Activated CD4-positive, alpha-beta T cell treated with anti-CD3 and anti-CD28 coated beads for 36 hours (primary cell): ENCODE measurements at regions of chr1 and their contacts with region 1.

Region 1: GRCh38 chr1:26378088-26378878 is 5.7 kb upstream of the ZNF683 start:
- DNase-seq: peak; percentile 80
- ATAC-seq: peak; percentile 95
- H3K4me3 Mint-ChIP-seq: peak overlapping the region; percentile 36
- H3K27ac Mint-ChIP-seq: peak overlapping the region; percentile 47
- H3K4me1 Mint-ChIP-seq: peaks cover 61% of the 10 kb centered on the region
- H3K27me3 Mint-ChIP-seq: no peaks in the 10 kb centered on the region

Region 2: GRCh38 chr1:26352338-26352679 is 26.0 kb before region 1 on chr1:
- CTCF ChIA-PET with region 1: no interaction called
- POLR2A ChIA-PET with region 1: no interaction called
- intact Hi-C with region 1: no loop called
- DNase-seq: no peak
- ATAC-seq: no peak
- H3K4me3 Mint-ChIP-seq: no peak overlapping the region
- H3K27ac Mint-ChIP-seq: no peak overlapping the region
- H3K4me1 Mint-ChIP-seq: no peaks in the 10 kb centered on the region
- H3K27me3 Mint-ChIP-seq: no peaks in the 10 kb centered on the region

Region 3: GRCh38 chr1:26410706-26411623 is 32.7 kb after region 1 on chr1 and contains the start of gene LIN28A:
- CTCF ChIA-PET with region 1: interaction called, 6 read pairs
- POLR2A ChIA-PET with region 1: no interaction called
- intact Hi-C with region 1: loop called in 1 of 2 experiments (anchors 5 kb)
- DNase-seq: no peak
- ATAC-seq: no peak
- H3K4me3 Mint-ChIP-seq: no peak within 1 kb of the TSS
- H3K27ac Mint-ChIP-seq: no peak within 1 kb of the TSS
- H3K4me1 Mint-ChIP-seq: peaks cover 20% of the 10 kb centered on the region
- H3K27me3 Mint-ChIP-seq: peaks cover 43% of the 10 kb centered on the region
- total RNA-seq, gene LIN28A: not detected

Region 4: GRCh38 chr1:26472901-26473845 is 94.9 kb after region 1 on chr1:
- CTCF ChIA-PET with region 1: no interaction called
- POLR2A ChIA-PET with region 1: no interaction called
- intact Hi-C with region 1: no loop called
- DNase-seq: peak; percentile 97
- ATAC-seq: peak; percentile 62
- H3K4me3 Mint-ChIP-seq: peak overlapping the region; percentile 91
- H3K27ac Mint-ChIP-seq: peak overlapping the region; percentile 43
- H3K4me1 Mint-ChIP-seq: peaks cover 50% of the 10 kb centered on the region
- H3K27me3 Mint-ChIP-seq: no peaks in the 10 kb centered on the region

Region 5: GRCh38 chr1:26723013-26723991 is 345.0 kb after region 1 on chr1:
- CTCF ChIA-PET with region 1: no interaction called
- POLR2A ChIA-PET with region 1: no interaction called
- intact Hi-C with region 1: no loop called
- DNase-seq: peak; percentile 54
- ATAC-seq: peak; percentile 50
- H3K4me3 Mint-ChIP-seq: peak overlapping the region; percentile 34
- H3K27ac Mint-ChIP-seq: peak overlapping the region; percentile 82
- H3K4me1 Mint-ChIP-seq: peaks cover 95% of the 10 kb centered on the region
- H3K27me3 Mint-ChIP-seq: no peaks in the 10 kb centered on the region